ENCODE measurements at regions of chr21 and their contacts with region 1.

Region 1: GRCh38 chr21:34807146-34807880 is 138.5 kb downstream of the CLIC6 start:
- DNase-seq: peak in 8 of 9 experiments; percentile 45 to 87 (median 66)
- ATAC-seq: peak; percentile 86
- H3K4me3 ChIP-seq: no peak overlapping the region
- H3K4me3 Mint-ChIP-seq: no peak overlapping the region
- H3K27ac ChIP-seq: peak overlapping the region; percentile 12 to 84
- H3K27ac Mint-ChIP-seq: peak overlapping the region; percentile 92
- H3K4me1 ChIP-seq: peaks cover 44% of the 10 kb centered on the region
- H3K4me1 Mint-ChIP-seq: peaks cover 70% of the 10 kb centered on the region
- H3K27me3 ChIP-seq: no peaks in the 10 kb centered on the region
- H3K27me3 Mint-ChIP-seq: no peaks in the 10 kb centered on the region
- CTCF ChIP-seq: no peak

Region 2: DNA sequence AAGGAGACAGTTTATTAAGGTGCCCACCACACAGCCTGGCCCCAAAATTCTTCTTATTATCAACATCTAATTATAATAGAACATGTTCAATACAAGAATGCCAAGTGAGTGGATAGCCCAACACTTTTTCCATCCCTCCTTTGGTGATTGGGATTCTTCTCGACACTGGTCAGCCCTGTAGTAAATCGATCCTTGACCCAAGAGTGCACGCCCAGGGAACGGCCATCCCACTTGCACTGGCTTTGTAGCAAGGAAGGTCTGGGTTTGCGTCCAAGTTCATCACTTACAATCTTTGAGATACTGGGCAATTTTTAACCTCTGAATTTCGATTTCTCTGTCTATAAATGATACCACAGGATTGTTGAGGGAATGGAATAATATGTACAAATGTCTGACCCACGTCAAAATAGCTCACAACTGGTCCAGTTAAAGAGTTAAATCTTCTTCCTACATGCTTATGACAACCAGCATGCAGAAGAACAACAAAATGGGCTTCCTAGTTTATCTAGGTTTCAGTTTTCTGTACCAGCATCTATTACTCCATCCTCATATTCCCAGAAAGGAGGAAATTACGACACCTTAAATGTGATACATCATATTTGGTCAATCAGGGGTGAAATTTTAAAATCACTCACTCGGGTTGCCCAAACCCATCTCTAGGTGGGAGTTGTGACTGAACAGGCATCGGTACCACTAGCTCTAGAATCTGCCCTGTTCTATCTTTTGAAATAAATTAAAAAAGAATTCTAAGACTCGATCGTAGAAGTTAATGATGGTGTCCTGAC is 23.3 kb after region 1 on chr21:
- CTCF ChIA-PET with region 1: no interaction called
- POLR2A ChIA-PET with region 1: interaction called, 6 read pairs
- intact Hi-C with region 1: loop called in 1 of 2 experiments (anchors 2 kb)
- DNase-seq: no peak
- ATAC-seq: no peak
- H3K4me3 ChIP-seq: no peak overlapping the region
- H3K4me3 Mint-ChIP-seq: no peak overlapping the region
- H3K27ac ChIP-seq: no peak overlapping the region
- H3K27ac Mint-ChIP-seq: peak overlapping the region; percentile 17
- H3K4me1 ChIP-seq: peaks cover 9% of the 10 kb centered on the region
- H3K4me1 Mint-ChIP-seq: peaks cover 19% of the 10 kb centered on the region
- H3K27me3 ChIP-seq: no peaks in the 10 kb centered on the region
- H3K27me3 Mint-ChIP-seq: no peaks in the 10 kb centered on the region
- CTCF ChIP-seq: no peak

Region 3: GRCh38 chr21:34900376-34900775 is 93.1 kb after region 1 on chr21:
- CTCF ChIA-PET with region 1: no interaction called
- POLR2A ChIA-PET with region 1: no interaction called
- intact Hi-C with region 1: no loop called
- DNase-seq: no peak
- ATAC-seq: no peak
- H3K4me3 ChIP-seq: no peak overlapping the region
- H3K4me3 Mint-ChIP-seq: no peak overlapping the region
- H3K27ac ChIP-seq: no peak overlapping the region
- H3K27ac Mint-ChIP-seq: peak overlapping the region; percentile 22
- H3K4me1 ChIP-seq: peaks cover 3% of the 10 kb centered on the region
- H3K4me1 Mint-ChIP-seq: peaks cover 32% of the 10 kb centered on the region
- H3K27me3 ChIP-seq: no peaks in the 10 kb centered on the region
- H3K27me3 Mint-ChIP-seq: no peaks in the 10 kb centered on the region
- CTCF ChIP-seq: no peak

Measured in CD8-positive, alpha-beta T cell (primary cell).